Activated CD4-positive, alpha-beta memory T cell treated with anti-CD3 and anti-CD28 coated beads, Interleukin-2, amount 10 ng/mL, durations not matched to agents 7 days and 5 days (primary cell): ENCODE measurements at regions of chr15 and their contacts with region 1.

Region 1: GRCh38 chr15:92831655-92832328 is 68.3 kb upstream of the CHD2 start:
- DNase-seq: peak; percentile 93
- H3K4me3 Mint-ChIP-seq: peak overlapping the region; percentile 60
- H3K27ac Mint-ChIP-seq: peak overlapping the region; percentile 94
- H3K4me1 Mint-ChIP-seq: peaks cover 53% of the 10 kb centered on the region
- H3K27me3 Mint-ChIP-seq: no peaks in the 10 kb centered on the region

Region 2: GRCh38 chr15:92820236-92821021 is 11.4 kb before region 1 on chr15:
- CTCF ChIA-PET with region 1: interaction called, 69 read pairs
- POLR2A ChIA-PET with region 1: interaction called, 258 read pairs
- DNase-seq: peak; percentile 88
- H3K4me3 Mint-ChIP-seq: peak overlapping the region; percentile 78
- H3K27ac Mint-ChIP-seq: peak overlapping the region; percentile 93
- H3K4me1 Mint-ChIP-seq: peaks cover 66% of the 10 kb centered on the region
- H3K27me3 Mint-ChIP-seq: no peaks in the 10 kb centered on the region

Region 3: GRCh38 chr15:92845126-92845508 is 13.3 kb after region 1 on chr15:
- CTCF ChIA-PET with region 1: interaction called, 4 read pairs
- POLR2A ChIA-PET with region 1: interaction called, 55 read pairs
- DNase-seq: no peak
- H3K4me3 Mint-ChIP-seq: peak overlapping the region; percentile 58
- H3K27ac Mint-ChIP-seq: peak overlapping the region; percentile 96
- H3K4me1 Mint-ChIP-seq: peaks cover 61% of the 10 kb centered on the region
- H3K27me3 Mint-ChIP-seq: no peaks in the 10 kb centered on the region

Region 4: DNA sequence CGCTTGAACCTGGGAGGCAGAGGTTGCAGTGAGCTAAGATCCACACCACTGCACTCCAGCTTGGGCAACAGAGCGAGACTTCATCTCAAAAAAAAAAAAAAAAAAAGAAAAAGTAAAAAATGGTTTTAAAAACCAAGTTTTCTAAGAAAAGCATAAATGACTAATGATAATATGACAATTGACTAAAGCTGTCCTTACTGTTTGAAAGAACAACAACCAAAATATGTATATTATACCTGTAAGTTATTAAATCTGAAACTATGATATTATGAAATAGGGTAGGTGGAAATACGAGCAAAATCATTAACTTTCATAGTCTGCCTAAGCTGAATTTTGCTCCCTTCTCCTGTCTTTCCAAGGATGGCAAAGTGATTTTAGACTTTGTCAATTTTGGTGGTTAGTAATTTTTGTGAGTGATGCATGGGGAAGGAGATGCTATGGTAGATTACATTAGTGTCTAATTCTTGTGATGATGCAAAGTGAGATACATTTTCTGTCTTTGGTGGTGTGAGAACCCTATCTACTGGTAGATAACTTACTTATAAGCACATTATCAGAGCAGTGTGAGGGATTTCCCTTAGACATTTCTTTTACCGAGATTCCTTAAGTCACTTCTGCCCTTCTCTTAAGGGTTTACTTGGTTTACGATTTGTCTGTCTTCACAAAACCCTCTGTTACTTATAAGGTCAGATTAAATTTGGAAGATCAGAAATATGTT is 57.8 kb after region 1 on chr15:
- CTCF ChIA-PET with region 1: interaction called, 9 read pairs
- POLR2A ChIA-PET with region 1: interaction called, 453 read pairs
- DNase-seq: no peak
- H3K4me3 Mint-ChIP-seq: peak overlapping the region; percentile 67
- H3K27ac Mint-ChIP-seq: peak overlapping the region; percentile 82
- H3K4me1 Mint-ChIP-seq: peaks cover 70% of the 10 kb centered on the region
- H3K27me3 Mint-ChIP-seq: no peaks in the 10 kb centered on the region

Region 5: DNA sequence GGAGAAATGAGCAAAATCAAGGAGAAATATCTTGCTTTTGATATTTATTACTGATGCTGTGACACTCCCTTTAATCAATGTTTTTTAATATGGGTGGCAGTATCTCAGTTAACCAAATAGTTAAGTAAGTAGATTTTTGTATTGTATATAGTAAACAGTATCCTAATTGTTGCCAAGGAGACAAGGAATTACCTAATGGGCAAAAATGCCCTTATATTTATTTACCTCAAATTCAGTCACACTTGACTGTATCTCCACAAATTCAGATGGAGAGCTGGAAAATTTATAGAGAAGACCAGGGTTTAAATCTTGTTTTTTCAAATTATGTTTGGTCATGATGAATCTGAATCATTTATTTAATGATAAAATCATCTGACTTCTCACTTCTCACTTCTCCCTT is 64.8 kb after region 1 on chr15:
- CTCF ChIA-PET with region 1: interaction called, 11 read pairs
- POLR2A ChIA-PET with region 1: interaction called, 89 read pairs
- DNase-seq: no peak
- H3K4me3 Mint-ChIP-seq: no peak overlapping the region
- H3K27ac Mint-ChIP-seq: no peak overlapping the region
- H3K4me1 Mint-ChIP-seq: peaks cover 69% of the 10 kb centered on the region
- H3K27me3 Mint-ChIP-seq: no peaks in the 10 kb centered on the region

Region 6: DNA sequence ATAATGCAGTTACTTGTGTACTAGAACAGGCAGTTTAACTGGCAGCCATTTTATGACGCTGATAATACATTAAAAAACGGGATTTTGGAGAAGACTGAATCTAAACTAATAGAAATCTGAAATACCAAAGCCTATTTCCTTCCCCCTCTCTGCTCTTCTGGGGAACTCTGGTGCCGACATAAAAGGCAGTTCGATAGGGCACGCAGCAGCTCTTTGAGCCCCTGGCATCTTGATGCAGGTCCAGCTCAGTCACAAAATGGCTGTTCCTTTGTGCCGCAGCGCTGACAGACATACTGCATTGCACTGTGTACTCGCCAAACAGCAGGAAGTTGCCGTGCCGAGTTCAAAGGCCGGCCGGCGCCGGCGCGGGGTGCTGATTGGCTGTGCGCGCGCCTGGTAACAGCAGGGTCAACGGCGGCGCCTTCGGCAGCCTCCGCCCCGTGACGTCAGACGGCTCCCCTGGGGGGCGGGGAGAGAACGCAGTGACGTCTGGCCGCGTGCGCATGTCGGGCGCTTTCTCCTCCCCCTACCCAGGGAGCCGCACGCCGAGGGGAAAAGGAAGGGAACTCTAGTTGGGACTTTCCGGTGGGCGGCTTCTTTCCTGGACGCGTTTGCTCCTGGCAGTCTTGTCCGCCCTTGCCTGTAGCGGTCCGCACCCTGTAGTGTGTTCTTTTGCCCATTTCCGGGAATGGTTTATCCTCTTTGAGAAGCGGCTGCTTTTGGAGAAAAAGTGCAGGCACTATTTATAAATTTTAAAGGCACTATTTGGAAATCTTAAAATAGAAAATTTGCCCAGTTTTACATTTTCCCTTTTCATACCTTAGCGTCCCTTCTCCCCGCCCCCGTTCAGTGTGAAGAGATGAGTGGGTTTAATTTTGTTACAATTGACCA is 72.4 kb after region 1 on chr15:
- CTCF ChIA-PET with region 1: interaction called, 11 read pairs
- POLR2A ChIA-PET with region 1: interaction called, 89 read pairs
- DNase-seq: peak; percentile 100
- H3K4me3 Mint-ChIP-seq: peak overlapping the region; percentile 92
- H3K27ac Mint-ChIP-seq: peak overlapping the region; percentile 100
- H3K4me1 Mint-ChIP-seq: peaks cover 55% of the 10 kb centered on the region
- H3K27me3 Mint-ChIP-seq: no peaks in the 10 kb centered on the region